ENCODE measurements at regions of chr4 and their contacts with region 1.

Region 1: DNA sequence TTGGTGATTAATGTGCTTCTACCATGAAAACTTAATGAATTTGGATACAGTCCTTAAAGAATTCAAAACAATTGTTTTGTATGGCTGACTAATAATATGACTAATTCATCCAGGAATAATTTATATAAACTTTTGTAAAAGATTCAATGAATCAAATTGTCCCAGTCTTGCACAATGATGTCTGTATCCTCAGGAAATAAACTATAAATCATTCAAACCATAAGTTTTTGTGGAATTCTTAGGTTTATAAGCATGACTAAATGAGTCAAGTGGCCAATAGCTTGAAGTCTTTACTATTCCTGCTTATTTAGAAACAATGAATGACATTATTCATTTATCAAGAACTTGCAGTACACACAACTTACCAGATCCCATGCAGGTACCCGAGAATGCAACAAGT is 935.0 kb upstream of the INTU start:
- DNase-seq: peak; percentile 72
- H3K4me3 ChIP-seq: no peak overlapping the region
- H3K27ac ChIP-seq: no peak overlapping the region
- H3K4me1 ChIP-seq: peaks cover 17% of the 10 kb centered on the region
- H3K27me3 ChIP-seq: no peaks in the 10 kb centered on the region
- CTCF ChIP-seq: no peak
- POLR2A ChIP-seq: no peak

Region 2: DNA sequence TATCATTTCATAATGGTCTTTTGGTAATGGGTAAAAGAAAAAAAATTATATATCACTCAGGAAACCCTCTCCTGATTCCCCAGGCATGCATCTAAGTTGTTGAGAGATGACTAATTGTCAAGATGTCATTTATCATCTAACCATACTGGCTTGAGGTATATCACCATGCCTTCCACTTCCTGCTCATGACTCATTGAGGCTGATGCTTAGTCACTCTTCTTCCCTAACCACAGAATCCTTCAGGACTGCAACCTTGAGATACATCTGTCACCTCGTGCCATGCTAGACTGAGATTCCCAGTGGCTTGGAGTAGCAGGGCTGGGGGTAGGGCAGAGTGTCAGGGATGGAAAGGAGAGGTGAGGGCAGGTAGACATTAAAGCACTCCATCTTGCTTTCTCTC is 152.5 kb after region 1 on chr4:
- CTCF ChIA-PET with region 1: no interaction called
- POLR2A ChIA-PET with region 1: no interaction called
- dilution Hi-C with region 1: no loop called
- intact Hi-C with region 1: loop called (anchors 1 kb)
- DNase-seq: peak; percentile 71
- H3K4me3 ChIP-seq: no peak overlapping the region
- H3K27ac ChIP-seq: no peak overlapping the region
- H3K4me1 ChIP-seq: peaks cover 11% of the 10 kb centered on the region
- H3K27me3 ChIP-seq: no peaks in the 10 kb centered on the region
- CTCF ChIP-seq: no peak
- POLR2A ChIP-seq: no peak

Region 3: DNA sequence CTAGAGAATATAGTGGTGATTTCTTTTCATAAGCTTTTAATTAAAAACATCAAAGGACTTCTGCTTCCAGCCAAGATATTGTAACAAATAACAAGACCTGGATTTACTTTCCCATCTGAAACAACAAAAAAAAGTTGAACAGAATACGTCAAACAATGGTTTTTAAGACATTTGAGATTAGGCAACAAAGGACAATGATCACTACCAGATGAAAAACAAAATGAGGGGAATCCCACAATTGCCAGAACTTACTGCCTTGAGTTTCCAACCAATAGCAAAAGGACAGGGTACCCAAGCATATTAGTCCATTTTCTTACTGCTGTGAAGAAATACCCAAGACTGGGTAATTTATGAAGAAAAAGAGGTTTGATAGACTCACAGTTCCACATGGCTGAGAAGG is 593.6 kb after region 1 on chr4:
- CTCF ChIA-PET with region 1: no interaction called
- POLR2A ChIA-PET with region 1: no interaction called
- dilution Hi-C with region 1: no loop called
- intact Hi-C with region 1: no loop called
- DNase-seq: no peak
- H3K4me3 ChIP-seq: no peak overlapping the region
- H3K27ac ChIP-seq: no peak overlapping the region
- H3K4me1 ChIP-seq: no peaks in the 10 kb centered on the region
- H3K27me3 ChIP-seq: no peaks in the 10 kb centered on the region
- CTCF ChIP-seq: no peak
- POLR2A ChIP-seq: no peak

Measured in endothelial cell of umbilical vein (primary cell).